WTC11 (cell line): ENCODE measurements at regions of chr12 and their contacts with region 1.

Region 1: DNA sequence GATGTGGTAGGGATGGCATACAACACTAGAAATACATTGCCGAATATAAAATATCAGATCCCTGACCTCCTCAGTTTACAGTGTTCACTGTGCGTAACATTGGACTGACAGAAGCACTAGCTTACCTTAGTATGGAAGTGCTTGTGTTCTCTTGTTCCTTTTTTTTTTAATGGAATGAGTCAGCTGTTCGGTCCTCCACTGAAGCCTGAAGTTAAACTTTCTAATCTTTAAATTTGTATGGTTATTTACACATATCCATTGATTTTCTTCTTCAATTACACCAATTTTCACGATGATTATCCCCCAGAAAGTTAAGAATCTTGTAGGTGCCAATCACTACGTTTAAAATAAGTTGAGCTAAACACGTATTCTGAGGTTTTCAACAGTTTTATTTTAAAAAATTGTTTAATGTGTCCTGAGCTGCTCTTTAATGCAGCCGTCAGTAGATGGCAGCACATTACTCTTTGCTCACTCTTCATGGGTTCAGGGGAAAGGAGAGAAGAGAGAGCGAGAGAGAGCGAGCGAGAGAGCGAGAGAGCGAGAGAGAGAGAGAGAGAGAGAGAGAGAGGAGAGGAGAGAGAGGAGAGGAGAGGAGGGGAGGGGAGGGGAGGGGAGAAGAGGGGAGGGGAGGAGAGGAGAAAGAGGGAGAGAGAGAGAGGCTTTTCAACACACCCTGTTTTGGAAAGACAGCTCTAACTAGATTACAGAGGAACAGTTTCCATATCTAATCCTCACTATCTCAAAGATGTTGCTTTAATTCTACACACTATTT is 134.7 kb upstream of the SCAF11 start:
- DNase-seq: peak; percentile 30
- ATAC-seq: peak; percentile 94
- H3K4me3 Mint-ChIP-seq: no peak overlapping the region
- H3K27ac Mint-ChIP-seq: no peak overlapping the region
- H3K4me1 Mint-ChIP-seq: 0 out of 2 replicates have a peak, but pooled peaks cover 3% of the 10 kb centered on the region
- H3K27me3 Mint-ChIP-seq: peaks cover 8% of the 10 kb centered on the region
- CTCF ChIP-seq: no peak

Region 2: GRCh38 chr12:45098766-45099165 is 1026.3 kb before region 1 on chr12:
- CTCF ChIA-PET with region 1: no interaction called
- POLR2A ChIA-PET with region 1: no interaction called
- DNase-seq: no peak
- ATAC-seq: no peak
- H3K4me3 Mint-ChIP-seq: no peak overlapping the region
- H3K27ac Mint-ChIP-seq: no peak overlapping the region
- H3K4me1 Mint-ChIP-seq: no peaks in the 10 kb centered on the region
- H3K27me3 Mint-ChIP-seq: no peaks in the 10 kb centered on the region
- CTCF ChIP-seq: no peak

Region 3: DNA sequence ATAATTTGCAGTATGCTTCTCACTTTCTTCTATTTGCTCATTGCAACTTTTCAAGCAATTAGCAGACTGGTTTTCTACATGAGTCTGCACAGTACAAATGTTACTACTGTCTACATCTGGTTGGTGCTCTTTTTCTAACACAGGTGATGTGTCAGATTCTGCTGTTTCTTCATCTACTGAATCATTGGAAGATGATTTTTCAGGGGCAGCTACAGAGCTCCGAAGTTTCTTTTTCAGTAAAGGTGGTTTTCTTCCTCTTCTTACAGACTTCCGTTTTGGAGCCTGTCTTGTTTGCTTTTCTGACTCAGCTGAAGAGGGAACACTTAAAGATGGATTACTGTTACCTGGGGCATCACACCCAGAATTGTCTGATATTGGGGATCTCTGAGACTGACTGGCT is 196.7 kb before region 1 on chr12:
- CTCF ChIA-PET with region 1: no interaction called
- POLR2A ChIA-PET with region 1: no interaction called
- DNase-seq: no peak
- ATAC-seq: no peak
- H3K4me3 Mint-ChIP-seq: no peak overlapping the region
- H3K27ac Mint-ChIP-seq: no peak overlapping the region
- H3K4me1 Mint-ChIP-seq: no peaks in the 10 kb centered on the region
- H3K27me3 Mint-ChIP-seq: no peaks in the 10 kb centered on the region
- CTCF ChIP-seq: no peak

Region 4: GRCh38 chr12:45990468-45991283 is 134.4 kb before region 1 on chr12 and contains the start of gene SCAF11:
- CTCF ChIA-PET with region 1: interaction called, 17 read pairs
- POLR2A ChIA-PET with region 1: interaction called, 3 read pairs
- DNase-seq: peak; percentile 100
- ATAC-seq: peak; percentile 82
- H3K4me3 Mint-ChIP-seq: peak within 1 kb of the TSS; percentile 89
- H3K27ac Mint-ChIP-seq: peak within 1 kb of the TSS; percentile 97
- H3K4me1 Mint-ChIP-seq: peaks cover 32% of the 10 kb centered on the region
- H3K27me3 Mint-ChIP-seq: peaks cover 7% of the 10 kb centered on the region
- CTCF ChIP-seq: peak; percentile 94
- total RNA-seq, gene SCAF11: 65.6 to 82.4 TPM (median 72.6 TPM) in 3 replicates

Region 5: DNA sequence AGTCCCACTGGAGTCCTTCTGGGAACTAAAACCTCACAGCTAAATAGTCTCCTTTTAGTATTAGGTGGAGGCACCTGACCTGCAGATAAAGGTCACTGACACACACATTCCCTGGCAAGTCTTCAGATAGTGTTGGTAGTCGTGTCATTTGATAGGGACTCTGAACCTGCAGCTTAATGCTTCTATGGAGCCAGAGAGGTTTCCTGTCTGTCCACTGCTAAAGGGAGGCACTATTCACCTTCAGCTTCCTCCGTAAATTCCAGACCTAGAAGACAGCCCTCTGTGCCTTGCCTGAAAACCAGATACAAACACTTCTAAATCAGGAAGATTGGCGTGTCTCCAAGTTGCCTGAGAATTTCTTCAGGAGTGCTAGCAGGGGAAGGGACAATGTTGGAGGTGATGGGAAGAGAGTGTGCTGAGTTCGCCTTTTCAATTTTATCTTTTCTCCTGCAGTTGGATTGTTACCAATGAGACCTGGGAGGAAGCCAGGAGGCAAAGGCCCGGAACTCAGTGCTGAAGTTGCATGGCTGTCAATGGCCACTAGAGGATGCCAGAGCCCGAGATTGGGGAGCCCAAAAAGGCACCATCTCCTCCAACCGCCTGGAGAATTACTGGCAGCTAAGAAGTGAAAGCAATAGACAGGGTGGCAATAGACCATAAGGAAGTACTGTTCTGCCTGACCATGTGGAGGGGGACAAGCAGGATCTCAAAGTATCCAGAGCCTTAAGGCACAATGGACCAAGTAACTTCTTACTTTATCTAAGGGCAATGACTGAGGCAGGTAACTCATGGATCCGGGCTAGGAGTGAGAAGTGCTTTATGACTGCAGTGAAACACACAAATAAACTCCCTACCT is 53.0 kb before region 1 on chr12:
- CTCF ChIA-PET with region 1: interaction called, 21 read pairs
- POLR2A ChIA-PET with region 1: no interaction called
- DNase-seq: peak; percentile 78
- ATAC-seq: peak; percentile 99
- H3K4me3 Mint-ChIP-seq: no peak overlapping the region
- H3K27ac Mint-ChIP-seq: no peak overlapping the region
- H3K4me1 Mint-ChIP-seq: peaks cover 4% of the 10 kb centered on the region
- H3K27me3 Mint-ChIP-seq: no peaks in the 10 kb centered on the region; the same call in 1 of the 2 replicates
- CTCF ChIP-seq: peak; percentile 87